ENCODE measurements at regions of chr2 and their contacts with region 1.

Region 1: DNA sequence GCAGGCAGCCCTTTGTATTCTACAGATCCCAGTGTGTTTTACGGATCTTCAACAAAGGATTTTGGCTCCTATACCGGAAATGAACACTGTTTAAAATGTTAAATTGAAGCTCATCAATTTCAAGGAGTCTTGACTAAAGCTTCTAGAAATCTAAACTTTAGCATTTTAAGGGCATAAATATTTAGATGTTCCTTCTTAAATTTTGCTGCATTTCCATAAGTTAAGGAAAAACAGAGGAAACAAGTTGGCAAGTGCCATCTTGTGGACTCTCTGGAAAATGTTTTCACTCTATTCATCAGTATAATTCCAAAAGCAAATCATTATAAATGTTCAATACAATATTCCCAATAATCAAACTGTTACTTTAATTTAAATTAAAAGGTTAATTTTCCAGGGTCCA is 19.6 kb downstream of the CHN1 start:
- DNase-seq: no peak
- ATAC-seq: no peak

Region 2: GRCh38 chr2:174138161-174138560 is 847.5 kb before region 1 on chr2:
- intact Hi-C with region 1: no loop called
- DNase-seq: no peak
- ATAC-seq: peak in 1 of 2 donors; percentile 60

Region 3: DNA sequence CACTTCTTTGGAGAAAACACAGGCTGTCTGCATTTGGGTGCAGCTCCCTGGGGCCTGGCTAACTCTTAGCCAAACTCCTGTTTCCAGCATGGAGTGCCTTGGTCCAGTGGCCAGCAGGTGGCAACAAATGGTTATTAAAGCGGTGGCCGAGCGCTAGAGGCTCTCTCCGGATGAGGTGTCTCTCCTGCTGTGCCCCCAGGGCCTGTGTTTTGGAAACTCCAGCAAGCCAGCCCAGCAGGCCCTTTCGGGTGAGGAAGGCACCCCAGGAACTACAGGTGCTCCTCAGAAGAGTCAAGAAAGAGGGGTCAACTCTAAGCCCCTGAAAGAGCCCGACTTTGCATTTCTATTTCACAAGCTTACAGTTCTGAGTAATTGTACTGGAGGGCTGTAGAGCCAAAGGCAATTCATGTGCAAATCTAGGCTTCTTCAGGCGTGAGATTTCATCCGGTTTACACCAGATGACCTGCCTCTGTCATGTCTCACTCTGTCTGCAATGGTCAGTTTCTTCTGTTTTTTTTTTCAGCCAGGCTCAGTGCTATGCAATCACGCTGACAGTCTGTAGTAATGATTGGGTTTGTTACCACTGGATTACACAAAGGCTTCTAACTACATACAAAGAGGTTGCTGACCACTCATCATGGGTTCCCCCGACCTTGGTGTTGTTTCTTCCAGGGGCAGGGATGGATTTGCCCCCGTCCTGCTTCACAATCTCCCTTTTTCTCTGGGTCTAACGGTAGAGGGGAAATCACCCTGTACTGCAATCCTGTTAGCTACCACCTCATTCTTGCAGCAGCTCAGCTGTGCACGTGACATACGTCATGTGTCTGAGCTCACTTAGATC is 213.8 kb before region 1 on chr2:
- intact Hi-C with region 1: loop called (anchors 2 to 5 kb)
- DNase-seq: peak; percentile 85
- ATAC-seq: peak; percentile 96 to 97

Measured in left cardiac atrium (tissue), 4 donors.